Gastrocnemius medialis (tissue), 4 donors: ENCODE measurements at regions of chr20 and their contacts with region 1.

Region 1: GRCh38 chr20:59087829-59088433 is 45.3 kb upstream of the PRELID3B start:
- DNase-seq: peak; percentile 46 to 65
- ATAC-seq: peak; percentile 54 to 72
- H3K4me3 ChIP-seq: no peak overlapping the region
- H3K27ac ChIP-seq: no peak overlapping the region
- H3K4me1 ChIP-seq: peaks cover 0 to 5% of the 10 kb centered on the region in 2 donors
- H3K27me3 ChIP-seq: no peaks in the 10 kb centered on the region
- CTCF ChIP-seq: peak; percentile 64 to 94 (median 82)
- POLR2A ChIP-seq: no peak

Region 2: DNA sequence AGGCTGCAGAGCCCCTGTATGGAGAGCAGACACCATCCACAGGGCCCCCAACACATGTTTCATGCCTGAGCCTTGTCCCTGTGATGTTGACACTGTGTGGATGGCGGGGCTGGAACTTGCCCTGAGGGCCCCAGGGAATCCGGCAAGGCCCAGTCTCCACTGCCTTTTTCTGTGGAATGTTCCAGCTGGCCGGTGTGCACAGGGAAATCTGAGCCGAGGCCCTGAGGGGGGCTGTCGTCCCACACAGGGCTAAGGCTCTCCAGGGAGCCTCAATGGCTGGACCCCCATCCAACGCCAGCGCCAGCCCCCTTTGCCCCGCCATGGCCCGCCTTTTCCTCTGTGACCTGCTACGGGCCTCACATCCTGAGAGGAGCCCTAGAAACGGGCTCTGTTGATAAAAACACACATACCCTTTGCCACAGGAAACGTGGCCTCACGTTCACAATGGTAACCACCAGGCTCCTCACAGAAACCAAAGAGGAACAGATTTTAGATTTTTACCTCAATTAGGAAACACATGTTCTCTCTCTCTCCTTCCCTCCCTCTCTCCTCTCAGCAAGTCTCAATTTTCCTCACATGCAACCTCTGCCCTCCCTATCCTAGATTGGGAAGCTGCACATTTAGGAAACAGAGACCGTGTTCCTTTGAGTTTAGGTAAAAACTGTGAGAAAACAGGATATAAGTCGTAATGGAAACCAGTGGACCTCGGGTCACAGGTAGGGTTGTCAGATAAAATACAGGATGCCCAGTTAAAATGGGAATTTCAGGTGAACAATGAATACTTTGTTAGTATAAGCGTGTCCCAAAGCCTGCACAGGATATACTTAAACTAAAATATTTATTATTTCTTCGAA is 61.9 kb after region 1 on chr20:
- in situ Hi-C with region 1: no loop called
- intact Hi-C with region 1: no loop called
- DNase-seq: peak in 1 of 2 donors; percentile 19
- ATAC-seq: no peak
- H3K4me3 ChIP-seq: no peak overlapping the region
- H3K27ac ChIP-seq: peak overlapping the region; percentile 7 to 59 (median 38)
- H3K4me1 ChIP-seq: peaks cover 22 to 46% of the 10 kb centered on the region in 2 donors
- H3K27me3 ChIP-seq: no peaks in the 10 kb centered on the region
- CTCF ChIP-seq: no peak
- POLR2A ChIP-seq: no peak

Region 3: DNA sequence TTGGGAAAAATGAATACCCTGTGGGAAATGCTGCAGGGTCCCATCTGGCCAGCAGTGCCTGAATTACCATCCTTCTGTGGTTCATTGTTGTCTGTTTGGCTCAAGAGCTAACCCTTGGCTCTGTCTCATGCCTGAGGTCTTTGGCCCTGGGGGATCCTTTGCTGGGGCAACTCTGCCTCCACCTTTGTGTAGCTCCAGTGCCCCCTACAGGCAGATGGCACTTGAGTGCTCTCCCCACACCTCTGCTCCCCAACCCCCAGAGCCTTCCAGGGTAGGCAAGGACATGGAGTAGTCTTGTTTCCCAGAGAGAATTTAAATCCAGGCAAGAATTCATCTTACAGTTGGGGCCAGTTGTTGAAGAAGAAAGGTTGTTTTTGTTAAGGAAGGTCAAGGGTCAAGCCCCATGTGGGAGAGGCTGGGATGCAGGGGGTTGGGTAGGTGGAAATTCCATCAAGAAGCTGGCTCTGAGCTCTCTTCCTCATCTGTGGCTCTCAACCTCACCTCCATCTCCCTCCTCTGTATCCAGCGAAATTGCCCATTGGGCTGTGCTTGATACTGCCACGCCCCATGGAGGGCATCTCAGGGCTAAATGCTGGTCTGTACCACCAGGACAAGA is 119.9 kb after region 1 on chr20:
- in situ Hi-C with region 1: loop called in 3 of 4 experiments (anchors 5 to 10 kb)
- intact Hi-C with region 1: loop called (anchors 5 kb)
- DNase-seq: no peak
- ATAC-seq: peak in 1 of 2 donors; percentile 65
- H3K4me3 ChIP-seq: no peak overlapping the region
- H3K27ac ChIP-seq: no peak overlapping the region
- H3K4me1 ChIP-seq: no peaks in the 10 kb centered on the region
- H3K27me3 ChIP-seq: peaks cover 0 to 3% (median 0%) of the 10 kb centered on the region in 3 donors
- CTCF ChIP-seq: peak; percentile 32 to 61 (median 45)
- POLR2A ChIP-seq: no peak

Region 4: GRCh38 chr20:59222253-59223181 is 134.6 kb after region 1 on chr20:
- in situ Hi-C with region 1: loop called in 3 of 4 experiments (anchors 5 to 10 kb)
- intact Hi-C with region 1: loop called (anchors 2 kb)
- DNase-seq: peak; percentile 36 to 47
- ATAC-seq: peak; percentile 73 to 76
- H3K4me3 ChIP-seq: peak overlapping the region; percentile 54 to 85 (median 60)
- H3K27ac ChIP-seq: peak overlapping the region in 3 of 4 donors; percentile 30 to 51 (median 47)
- H3K4me1 ChIP-seq: peaks cover 10 to 16% of the 10 kb centered on the region in 2 donors
- H3K27me3 ChIP-seq: peaks cover 0 to 6% (median 5%) of the 10 kb centered on the region in 3 donors
- CTCF ChIP-seq: peak; percentile 82 to 98 (median 83)
- POLR2A ChIP-seq: no peak

Region 5: GRCh38 chr20:59403261-59403961 is 315.5 kb after region 1 on chr20:
- in situ Hi-C with region 1: loop called in 1 of 4 experiments (anchors 25 kb)
- intact Hi-C with region 1: loop called (anchors 5 kb)
- DNase-seq: no peak
- ATAC-seq: no peak
- H3K4me3 ChIP-seq: peak overlapping the region in 1 of 4 donors; percentile 24
- H3K27ac ChIP-seq: no peak overlapping the region
- H3K4me1 ChIP-seq: peaks cover 0 to 5% of the 10 kb centered on the region in 2 donors
- H3K27me3 ChIP-seq: peaks cover 42 to 60% (median 48%) of the 10 kb centered on the region in 3 donors
- CTCF ChIP-seq: peak; percentile 66 to 85 (median 68)
- POLR2A ChIP-seq: no peak